ENCODE measurements at regions of chr14 and their contacts with region 1.

Region 1: GRCh38 chr14:93939304-93940229 is 12.4 kb downstream of the FAM181A start:
- DNase-seq: peak; percentile 25
- ATAC-seq: peak; percentile 98
- H3K4me3 ChIP-seq: no peak overlapping the region
- H3K27ac ChIP-seq: no peak overlapping the region; the same call in 1 of the 2 replicates
- H3K4me1 ChIP-seq: peaks cover 8% of the 10 kb centered on the region
- H3K27me3 ChIP-seq: no peaks in the 10 kb centered on the region
- CTCF ChIP-seq: peak; percentile 76 to 95 (median 78); a peak in 5 of 6 replicates
- EP300 ChIP-seq: no peak
- POLR2A ChIP-seq: no peak; the same call in 1 of the 2 replicates
- RAD21 ChIP-seq: peak; percentile 80

Region 2: DNA sequence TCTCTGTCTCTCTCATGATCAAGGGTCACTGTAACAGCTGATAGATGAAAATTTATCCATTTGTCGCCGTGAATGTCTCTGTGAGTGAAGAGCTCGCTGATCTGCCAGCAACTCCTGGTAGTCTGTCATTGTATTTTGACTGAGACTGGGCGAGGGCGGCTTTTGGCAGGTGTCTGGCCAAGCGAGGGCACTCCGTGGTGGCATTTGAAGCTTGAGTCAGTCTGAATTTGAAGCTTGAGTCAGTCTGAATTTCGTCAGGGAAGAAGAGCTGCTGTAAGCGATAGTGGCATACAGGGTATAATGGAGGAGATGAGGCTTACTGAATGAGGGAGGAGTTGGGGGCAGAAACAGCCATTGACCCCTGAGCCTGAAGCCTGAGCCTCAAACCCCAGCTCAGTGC is 69.2 kb before region 1 on chr14:
- CTCF ChIA-PET with region 1: no interaction called
- POLR2A ChIA-PET with region 1: no interaction called
- RAD21 ChIA-PET with region 1: no interaction called
- SMC1A ChIA-PET with region 1: no interaction called
- in situ Hi-C with region 1: no loop called
- intact Hi-C with region 1: no loop called
- DNase-seq: no peak
- ATAC-seq: no peak
- H3K4me3 ChIP-seq: no peak overlapping the region
- H3K27ac ChIP-seq: no peak overlapping the region
- H3K4me1 ChIP-seq: no peaks in the 10 kb centered on the region
- H3K27me3 ChIP-seq: peaks cover 2 to 3% of the 10 kb centered on the region in 2 experiments; a peak in 2 of 4 replicates
- CTCF ChIP-seq: no peak
- EP300 ChIP-seq: no peak
- POLR2A ChIP-seq: no peak
- RAD21 ChIP-seq: no peak

Region 3: DNA sequence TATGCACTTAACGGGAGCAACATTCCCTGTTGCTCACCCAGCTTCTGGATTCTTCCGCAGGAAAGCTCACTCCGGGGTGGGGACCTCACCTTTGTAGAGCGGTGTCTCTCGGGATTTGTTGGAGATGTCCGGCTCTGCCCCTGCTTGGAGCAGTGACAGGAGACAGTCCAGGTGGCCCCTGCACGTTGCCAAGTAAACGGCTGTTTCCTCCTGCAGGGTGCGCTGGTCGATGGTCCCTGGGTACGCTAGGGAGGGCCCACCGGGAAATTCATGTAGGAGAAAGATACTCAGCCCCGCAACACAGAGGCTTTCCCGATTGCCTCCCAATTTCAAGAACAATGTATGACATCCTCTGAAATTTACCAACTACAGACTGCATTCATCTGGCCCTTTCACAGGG is 13.7 kb after region 1 on chr14:
- CTCF ChIA-PET with region 1: interaction called, 58 read pairs
- POLR2A ChIA-PET with region 1: interaction called, 5 read pairs
- RAD21 ChIA-PET with region 1: interaction called, 43 read pairs
- SMC1A ChIA-PET with region 1: interaction called, 77 read pairs
- in situ Hi-C with region 1: no loop called
- intact Hi-C with region 1: loop called (anchors 2 kb)
- DNase-seq: no peak
- ATAC-seq: no peak
- H3K4me3 ChIP-seq: no peak overlapping the region
- H3K27ac ChIP-seq: no peak overlapping the region
- H3K4me1 ChIP-seq: peaks cover 59% of the 10 kb centered on the region
- H3K27me3 ChIP-seq: no peaks in the 10 kb centered on the region
- CTCF ChIP-seq: peak in 2 of 3 experiments; percentile 27 to 39; a peak in 3 of 6 replicates
- EP300 ChIP-seq: no peak
- POLR2A ChIP-seq: no peak
- RAD21 ChIP-seq: peak; percentile 57

Region 4: DNA sequence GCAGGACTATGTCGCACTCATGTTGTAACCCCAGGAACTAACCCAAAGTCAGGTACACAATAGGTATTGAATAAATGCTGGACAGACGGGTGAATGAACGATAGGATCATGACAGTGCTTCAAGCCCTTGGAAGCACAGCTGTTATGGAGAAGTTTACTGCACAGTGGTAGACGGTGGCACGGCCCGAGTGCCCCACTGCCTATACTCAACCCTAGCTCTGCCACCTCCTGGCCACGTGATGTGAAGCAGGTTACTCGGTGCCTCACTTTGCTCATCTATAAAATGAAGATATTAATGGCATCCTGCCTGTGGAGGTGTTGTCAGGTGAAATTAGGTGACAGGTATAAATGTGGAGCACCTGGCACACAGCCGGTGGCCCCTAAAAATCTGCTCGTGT is 31.0 kb after region 1 on chr14:
- CTCF ChIA-PET with region 1: interaction called, 343 read pairs
- POLR2A ChIA-PET with region 1: interaction called, 11 read pairs
- RAD21 ChIA-PET with region 1: interaction called, 209 read pairs
- SMC1A ChIA-PET with region 1: interaction called, 184 read pairs
- in situ Hi-C with region 1: no loop called
- intact Hi-C with region 1: loop called (anchors 1 kb)
- DNase-seq: no peak
- ATAC-seq: peak; percentile 66
- H3K4me3 ChIP-seq: peak overlapping the region; percentile 37; the same call in 1 of the 2 replicates
- H3K27ac ChIP-seq: peak overlapping the region; percentile 85
- H3K4me1 ChIP-seq: peaks cover 92% of the 10 kb centered on the region
- H3K27me3 ChIP-seq: no peaks in the 10 kb centered on the region
- CTCF ChIP-seq: peak; percentile 38 to 53 (median 47); a peak in 5 of 6 replicates
- EP300 ChIP-seq: no peak
- POLR2A ChIP-seq: no peak
- RAD21 ChIP-seq: peak; percentile 65

Region 5: DNA sequence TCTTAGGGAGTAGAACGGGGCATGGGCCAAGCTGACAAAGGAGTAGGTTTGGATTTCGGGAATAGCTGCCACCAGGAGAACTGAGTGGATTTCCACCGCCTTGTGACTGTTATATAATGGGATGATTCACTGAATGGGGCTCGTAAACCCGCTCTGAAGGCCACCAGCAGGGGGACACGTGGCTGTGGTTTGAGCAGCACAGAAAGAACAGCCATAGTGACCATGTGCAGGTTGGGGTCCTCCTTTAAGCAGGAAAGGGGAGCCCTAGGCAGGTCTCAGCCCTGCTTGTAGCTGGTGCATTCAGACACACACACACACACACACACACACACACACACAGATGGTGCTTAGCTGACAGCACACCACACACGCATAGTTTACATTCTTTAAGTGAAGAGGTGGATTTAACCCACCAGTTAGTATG is 45.4 kb after region 1 on chr14:
- CTCF ChIA-PET with region 1: interaction called, 541 read pairs
- POLR2A ChIA-PET with region 1: interaction called, 4 read pairs
- RAD21 ChIA-PET with region 1: interaction called, 20 read pairs
- SMC1A ChIA-PET with region 1: interaction called, 16 read pairs
- in situ Hi-C with region 1: no loop called
- intact Hi-C with region 1: no loop called
- DNase-seq: no peak
- ATAC-seq: peak; percentile 51
- H3K4me3 ChIP-seq: no peak overlapping the region
- H3K27ac ChIP-seq: no peak overlapping the region
- H3K4me1 ChIP-seq: peaks cover 18% of the 10 kb centered on the region
- H3K27me3 ChIP-seq: no peaks in the 10 kb centered on the region
- CTCF ChIP-seq: peak; percentile 19 to 40 (median 33); a peak in 5 of 6 replicates
- EP300 ChIP-seq: no peak
- POLR2A ChIP-seq: no peak
- RAD21 ChIP-seq: peak; percentile 41

Region 6: DNA sequence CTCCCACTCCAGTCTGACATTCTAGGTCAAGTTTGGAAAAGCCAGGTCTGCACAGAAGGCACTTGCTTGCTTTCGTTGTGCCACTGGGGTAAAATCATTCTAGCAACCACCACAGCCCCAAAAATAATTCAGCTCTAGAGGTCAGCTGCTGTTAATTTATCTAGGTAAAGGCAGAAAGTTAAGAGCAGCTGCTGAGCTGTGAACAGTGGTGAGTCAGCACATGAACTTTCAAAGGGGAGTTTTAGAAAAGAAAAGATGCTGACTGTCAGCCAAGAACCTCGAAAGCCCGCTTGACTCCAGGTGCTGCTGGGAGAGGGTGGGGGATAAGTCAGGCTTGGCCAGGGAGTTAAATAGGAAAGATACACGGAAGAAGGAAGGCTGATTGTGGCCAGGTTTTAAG is 70.2 kb after region 1 on chr14:
- CTCF ChIA-PET with region 1: interaction called, 541 read pairs
- POLR2A ChIA-PET with region 1: no interaction called
- RAD21 ChIA-PET with region 1: interaction called, 344 read pairs
- SMC1A ChIA-PET with region 1: interaction called, 24 read pairs
- in situ Hi-C with region 1: loop called (anchors 5 kb)
- intact Hi-C with region 1: no loop called
- DNase-seq: peak; percentile 25
- ATAC-seq: peak; percentile 86
- H3K4me3 ChIP-seq: no peak overlapping the region; the same call in 1 of the 2 replicates
- H3K27ac ChIP-seq: peak overlapping the region; percentile 20; the same call in 1 of the 2 replicates
- H3K4me1 ChIP-seq: peaks cover 36% of the 10 kb centered on the region
- H3K27me3 ChIP-seq: no peaks in the 10 kb centered on the region
- CTCF ChIP-seq: no peak
- EP300 ChIP-seq: peak; percentile 10 to 57; a peak in 1 of 4 replicates
- POLR2A ChIP-seq: no peak
- RAD21 ChIP-seq: no peak

Region 7: DNA sequence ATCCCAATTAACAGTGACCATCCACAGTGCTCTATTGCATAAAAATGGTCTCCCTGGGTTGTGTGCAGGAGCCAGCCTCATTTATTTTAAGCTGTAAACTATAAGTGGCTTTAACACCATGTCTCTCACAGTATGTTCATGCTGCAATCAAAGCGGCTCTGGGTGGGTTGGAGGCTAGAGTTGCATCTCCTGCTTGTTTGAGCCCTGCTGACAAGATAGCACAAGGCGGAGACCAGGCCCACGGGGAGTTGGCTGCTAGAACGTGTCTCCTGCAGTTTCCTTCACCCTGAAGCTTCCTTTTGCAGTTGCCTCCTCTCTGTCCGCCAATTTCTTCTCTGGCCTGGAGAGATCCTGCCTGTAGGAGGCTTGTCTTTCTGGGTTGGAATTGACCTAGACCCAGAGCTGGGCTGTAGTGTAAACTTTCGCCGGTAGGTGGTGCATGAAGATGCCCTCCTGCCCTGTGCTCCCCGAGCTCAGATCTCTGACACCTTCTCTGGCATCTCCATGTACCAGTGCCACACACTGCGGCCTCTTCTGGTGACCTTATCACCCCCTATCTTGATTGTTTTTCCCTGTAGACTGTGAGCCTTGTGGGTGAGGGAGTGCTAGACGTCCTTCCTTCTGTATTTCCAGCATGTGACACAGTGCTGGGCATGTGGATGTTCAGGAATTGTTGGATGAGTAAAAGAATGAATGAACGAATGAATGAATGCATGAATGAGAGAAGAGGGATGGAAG is 96.9 kb after region 1 on chr14:
- CTCF ChIA-PET with region 1: interaction called, 28 read pairs
- POLR2A ChIA-PET with region 1: no interaction called
- RAD21 ChIA-PET with region 1: interaction called, 15 read pairs
- SMC1A ChIA-PET with region 1: interaction called, 9 read pairs
- in situ Hi-C with region 1: no loop called
- intact Hi-C with region 1: no loop called
- DNase-seq: no peak
- ATAC-seq: peak; percentile 99
- H3K4me3 ChIP-seq: no peak overlapping the region
- H3K27ac ChIP-seq: no peak overlapping the region
- H3K4me1 ChIP-seq: no peaks in the 10 kb centered on the region
- H3K27me3 ChIP-seq: 0 out of 4 replicates have a peak, but pooled peaks cover 0 to 5% of the 10 kb centered on the region in 2 experiments
- CTCF ChIP-seq: peak; percentile 87 to 89 (median 88)
- EP300 ChIP-seq: no peak
- POLR2A ChIP-seq: no peak
- RAD21 ChIP-seq: peak; percentile 66

Region 8: DNA sequence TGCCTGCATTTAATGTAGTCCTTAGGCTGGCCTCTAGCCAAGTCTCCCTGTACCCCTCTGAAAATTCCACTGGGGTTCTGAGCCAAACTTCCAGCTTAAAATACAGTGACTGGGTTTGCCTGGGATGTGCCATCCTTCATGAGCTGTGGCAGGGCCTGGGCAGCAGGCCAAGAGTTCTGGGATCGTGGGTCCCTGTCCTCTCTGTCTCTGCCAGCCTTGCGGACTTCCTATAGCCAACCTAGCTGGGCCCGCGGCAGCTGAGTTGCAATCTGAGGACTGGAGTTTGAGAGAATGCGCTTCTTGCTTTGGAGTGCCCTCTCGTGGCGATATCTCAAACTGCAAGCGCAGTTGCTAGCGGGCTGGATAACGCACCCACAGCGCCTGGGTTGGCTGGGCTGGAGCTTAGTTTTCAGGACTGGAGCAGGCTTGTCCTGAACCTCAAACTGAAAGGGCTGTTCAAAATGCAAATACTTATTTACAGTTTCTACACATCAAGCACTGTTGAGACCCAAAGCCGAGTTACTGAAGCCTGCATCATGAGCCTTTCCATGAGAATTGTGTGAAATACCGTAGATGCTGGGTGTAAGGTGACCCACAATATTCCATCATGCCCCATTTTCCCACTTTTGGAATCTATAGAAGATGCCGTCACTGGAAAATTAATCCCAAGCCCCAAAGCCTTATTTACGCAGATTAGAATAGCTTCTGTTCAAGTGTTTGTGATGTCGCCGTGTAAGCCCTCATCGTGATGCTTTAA is 197.2 kb after region 1 on chr14:
- CTCF ChIA-PET with region 1: interaction called, 25 read pairs
- POLR2A ChIA-PET with region 1: interaction called, 4 read pairs
- RAD21 ChIA-PET with region 1: interaction called, 22 read pairs
- SMC1A ChIA-PET with region 1: interaction called, 14 read pairs
- in situ Hi-C with region 1: loop called (anchors 5 kb)
- intact Hi-C with region 1: loop called (anchors 2 kb)
- DNase-seq: no peak
- ATAC-seq: peak; percentile 96
- H3K4me3 ChIP-seq: no peak overlapping the region
- H3K27ac ChIP-seq: no peak overlapping the region
- H3K4me1 ChIP-seq: no peaks in the 10 kb centered on the region
- H3K27me3 ChIP-seq: no peaks in the 10 kb centered on the region; a peak in 1 of 4 replicates
- CTCF ChIP-seq: peak; percentile 96 to 99 (median 98)
- EP300 ChIP-seq: no peak
- POLR2A ChIP-seq: no peak
- RAD21 ChIP-seq: peak; percentile 96